ENCODE measurements at regions of chr11 and their contacts with region 1.

Region 1: DNA sequence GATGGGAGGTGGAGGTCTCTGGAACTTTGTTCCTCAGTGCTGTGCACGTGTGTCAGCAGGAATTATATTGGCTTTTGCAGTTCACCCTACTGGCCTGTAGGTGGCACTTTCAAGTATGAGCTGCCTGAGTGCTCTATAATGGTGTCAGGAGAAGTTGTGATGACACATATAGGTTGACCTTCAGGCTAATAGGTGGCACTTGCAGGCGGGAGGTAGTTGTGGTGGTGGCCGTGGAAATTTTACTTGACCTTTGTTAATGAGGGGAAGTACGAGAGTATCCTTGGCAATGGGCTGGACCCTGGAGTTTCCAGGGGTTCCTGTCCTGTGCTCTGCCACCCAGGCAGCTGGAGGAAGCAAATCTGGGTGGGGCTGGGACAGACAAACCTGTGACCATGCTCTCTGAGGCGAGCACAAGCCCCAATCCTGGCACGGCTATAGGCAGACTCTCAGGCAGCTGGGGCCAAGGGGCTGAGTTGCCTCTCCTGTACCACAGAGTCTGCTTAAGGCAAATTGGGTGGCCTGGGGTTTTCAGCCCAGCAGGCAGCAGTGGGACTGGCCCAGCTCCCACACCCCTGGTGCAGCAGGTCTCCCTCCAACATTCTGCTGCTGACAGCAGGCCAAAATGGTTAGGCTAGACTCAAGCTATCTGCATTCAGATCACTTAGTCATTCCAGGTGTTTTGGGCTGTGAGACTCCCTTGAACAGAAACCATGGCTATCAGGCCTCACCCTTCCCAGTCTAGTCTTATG is 147.5 kb upstream of the CTSC start:
- DNase-seq: peak; percentile 85
- H3K4me3 ChIP-seq: no peak overlapping the region
- H3K27ac ChIP-seq: no peak overlapping the region
- H3K4me1 ChIP-seq: peaks cover 29% of the 10 kb centered on the region
- H3K27me3 ChIP-seq: no peaks in the 10 kb centered on the region
- CTCF ChIP-seq: peak; percentile 68 to 82

Region 2: GRCh38 chr11:88284336-88285050 is 200.6 kb before region 1 on chr11:
- CTCF ChIA-PET with region 1: no interaction called
- dilution Hi-C with region 1: no loop called
- in situ Hi-C with region 1: no loop called
- intact Hi-C with region 1: no loop called
- DNase-seq: no peak
- H3K4me3 ChIP-seq: no peak overlapping the region
- H3K27ac ChIP-seq: no peak overlapping the region
- H3K4me1 ChIP-seq: no peaks in the 10 kb centered on the region
- H3K27me3 ChIP-seq: no peaks in the 10 kb centered on the region
- CTCF ChIP-seq: no peak

Region 3: DNA sequence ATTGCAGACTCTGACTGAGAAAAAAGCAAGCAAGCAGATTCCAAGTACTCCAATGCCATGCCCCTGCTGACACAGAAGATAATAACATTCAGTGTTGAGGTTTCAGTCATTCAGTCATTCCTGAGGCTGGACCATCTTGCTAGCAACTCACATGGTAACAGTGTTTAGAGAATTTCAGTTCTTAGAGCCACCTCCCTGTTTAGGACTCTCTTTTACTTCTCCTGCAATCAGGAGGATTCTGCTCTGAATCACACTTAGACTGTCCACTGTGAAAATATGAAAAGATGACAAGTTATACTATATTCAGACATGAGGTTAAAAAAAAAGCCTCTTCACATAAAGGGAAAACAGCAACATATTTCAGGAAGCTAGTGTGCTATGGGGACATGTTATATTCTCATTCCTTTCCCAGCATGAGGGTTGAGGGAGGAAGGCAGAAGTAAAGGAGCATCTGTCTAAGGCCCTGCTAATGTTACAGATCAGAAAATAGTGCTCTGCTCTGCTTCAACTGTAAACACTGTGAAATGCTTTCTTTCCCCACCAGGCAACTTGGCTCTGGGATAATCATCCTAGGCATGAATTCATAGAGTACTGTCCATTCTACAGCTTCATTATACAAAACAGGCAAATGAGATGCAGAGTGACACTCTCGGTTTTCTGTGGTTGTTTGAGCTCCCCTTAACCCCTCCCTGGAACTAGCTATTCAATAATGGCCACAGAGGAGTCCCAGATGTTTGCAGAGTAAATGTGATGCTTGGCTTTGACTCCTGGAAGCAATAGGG is 36.5 kb after region 1 on chr11:
- CTCF ChIA-PET with region 1: no interaction called
- dilution Hi-C with region 1: no loop called
- in situ Hi-C with region 1: no loop called
- intact Hi-C with region 1: loop called (anchors 1 kb)
- DNase-seq: no peak
- H3K4me3 ChIP-seq: no peak overlapping the region
- H3K27ac ChIP-seq: no peak overlapping the region
- H3K4me1 ChIP-seq: peaks cover 20% of the 10 kb centered on the region
- H3K27me3 ChIP-seq: no peaks in the 10 kb centered on the region
- CTCF ChIP-seq: no peak

Measured in mammary epithelial cell (primary cell).